ENCODE measurements at regions of chr2 and their contacts with region 1.

Region 1: DNA sequence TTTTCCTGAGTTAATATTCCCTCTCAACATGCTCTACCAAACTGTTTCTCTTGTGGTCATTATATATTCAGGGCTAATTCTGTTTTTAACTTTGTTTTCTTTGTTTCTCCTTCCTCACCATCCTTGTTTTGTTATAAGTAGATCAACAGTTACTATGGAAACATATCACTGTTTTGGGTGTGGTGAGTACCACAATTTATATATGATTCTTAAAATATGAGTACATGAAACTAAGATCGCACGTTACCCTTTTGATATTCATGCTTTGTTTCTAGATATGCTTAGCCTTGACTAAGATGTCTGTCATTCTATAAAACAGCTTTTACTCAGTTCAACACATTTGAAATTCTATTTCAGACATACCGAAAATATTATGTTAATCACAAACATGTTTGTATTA is 232.3 kb upstream of the ITGA4 start:
- DNase-seq: no peak
- H3K4me3 Mint-ChIP-seq: peak overlapping the region; percentile 59
- H3K27ac Mint-ChIP-seq: peak overlapping the region; percentile 87
- H3K4me1 Mint-ChIP-seq: peaks cover 24% of the 10 kb centered on the region
- H3K27me3 Mint-ChIP-seq: no peaks in the 10 kb centered on the region

Region 2: DNA sequence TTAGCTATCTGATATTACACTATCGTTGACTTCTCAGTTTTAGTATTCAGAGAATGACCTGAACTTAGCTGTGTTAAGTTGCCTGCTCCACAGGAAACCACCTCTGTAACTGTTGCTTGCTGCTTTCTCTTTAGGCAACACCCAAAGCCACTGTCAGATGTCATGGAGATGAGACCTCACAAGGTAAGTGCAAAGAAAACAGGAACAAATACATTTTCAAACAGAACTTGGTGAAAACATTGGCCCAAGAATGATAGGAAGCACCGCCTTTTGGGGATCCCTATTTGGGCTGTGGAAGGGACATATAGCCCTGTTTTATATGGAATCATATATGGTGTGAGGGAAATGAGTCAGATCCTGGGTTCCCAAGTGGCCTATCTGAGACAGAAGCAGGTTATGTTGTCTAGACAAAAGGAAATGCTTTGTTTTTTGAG is 101.1 kb before region 1 on chr2:
- CTCF ChIA-PET with region 1: no interaction called
- POLR2A ChIA-PET with region 1: no interaction called
- intact Hi-C with region 1: loop called (anchors 2 kb)
- DNase-seq: peak; percentile 67
- H3K4me3 Mint-ChIP-seq: peak overlapping the region; percentile 74
- H3K27ac Mint-ChIP-seq: peak overlapping the region; percentile 92
- H3K4me1 Mint-ChIP-seq: peaks cover 60% of the 10 kb centered on the region
- H3K27me3 Mint-ChIP-seq: no peaks in the 10 kb centered on the region

Region 3: DNA sequence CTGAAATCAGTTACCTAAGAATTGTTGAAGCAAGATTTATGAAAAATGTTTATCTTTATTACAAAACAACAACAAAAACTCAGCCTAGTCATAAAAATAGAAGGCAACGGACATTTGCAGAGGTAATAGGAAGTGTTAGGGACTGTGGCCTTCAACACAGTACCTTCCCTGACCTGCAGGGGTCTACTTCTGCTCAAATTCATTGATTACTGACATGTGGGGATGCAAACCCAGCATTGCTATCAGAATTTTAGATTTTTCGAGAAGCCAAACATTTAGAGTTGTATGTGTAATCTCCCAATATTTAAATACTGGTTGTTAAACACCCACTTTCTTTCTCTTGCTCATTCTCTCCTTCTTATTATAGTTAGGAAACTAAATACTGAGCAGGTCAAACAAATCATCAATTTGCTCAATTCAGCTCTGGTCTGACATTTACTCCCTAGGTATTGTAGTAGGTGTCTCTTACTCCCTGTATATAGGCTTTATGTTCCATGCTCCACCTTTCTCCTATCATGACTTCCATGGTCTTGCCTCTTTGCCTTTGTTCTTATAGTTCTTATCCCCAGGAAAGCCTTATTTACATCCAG is 45.9 kb before region 1 on chr2:
- CTCF ChIA-PET with region 1: no interaction called
- POLR2A ChIA-PET with region 1: no interaction called
- intact Hi-C with region 1: loop called (anchors 2 kb)
- DNase-seq: peak; percentile 55
- H3K4me3 Mint-ChIP-seq: no peak overlapping the region
- H3K27ac Mint-ChIP-seq: peak overlapping the region; percentile 73
- H3K4me1 Mint-ChIP-seq: peaks cover 46% of the 10 kb centered on the region
- H3K27me3 Mint-ChIP-seq: no peaks in the 10 kb centered on the region

Region 4: GRCh38 chr2:181241797-181242196 is 16.9 kb after region 1 on chr2:
- CTCF ChIA-PET with region 1: no interaction called
- POLR2A ChIA-PET with region 1: no interaction called
- intact Hi-C with region 1: loop called (anchors 2 kb)
- DNase-seq: peak; percentile 46
- H3K4me3 Mint-ChIP-seq: no peak overlapping the region
- H3K27ac Mint-ChIP-seq: peak overlapping the region; percentile 77
- H3K4me1 Mint-ChIP-seq: peaks cover 32% of the 10 kb centered on the region
- H3K27me3 Mint-ChIP-seq: no peaks in the 10 kb centered on the region

Measured in activated CD4-positive, alpha-beta memory T cell treated with anti-CD3 and anti-CD28 coated beads for 36 hours (primary cell).